ENCODE measurements at regions of chr10 and their contacts with region 1.

Region 1: GRCh38 chr10:8193546-8193945 is 139.1 kb downstream of the GATA3 start:
- DNase-seq: no peak
- H3K4me3 ChIP-seq: no peak overlapping the region
- H3K27ac ChIP-seq: no peak overlapping the region
- H3K4me1 ChIP-seq: no peaks in the 10 kb centered on the region
- H3K27me3 ChIP-seq: no peaks in the 10 kb centered on the region
- CTCF ChIP-seq: no peak
- POLR2A ChIP-seq: no peak

Region 2: DNA sequence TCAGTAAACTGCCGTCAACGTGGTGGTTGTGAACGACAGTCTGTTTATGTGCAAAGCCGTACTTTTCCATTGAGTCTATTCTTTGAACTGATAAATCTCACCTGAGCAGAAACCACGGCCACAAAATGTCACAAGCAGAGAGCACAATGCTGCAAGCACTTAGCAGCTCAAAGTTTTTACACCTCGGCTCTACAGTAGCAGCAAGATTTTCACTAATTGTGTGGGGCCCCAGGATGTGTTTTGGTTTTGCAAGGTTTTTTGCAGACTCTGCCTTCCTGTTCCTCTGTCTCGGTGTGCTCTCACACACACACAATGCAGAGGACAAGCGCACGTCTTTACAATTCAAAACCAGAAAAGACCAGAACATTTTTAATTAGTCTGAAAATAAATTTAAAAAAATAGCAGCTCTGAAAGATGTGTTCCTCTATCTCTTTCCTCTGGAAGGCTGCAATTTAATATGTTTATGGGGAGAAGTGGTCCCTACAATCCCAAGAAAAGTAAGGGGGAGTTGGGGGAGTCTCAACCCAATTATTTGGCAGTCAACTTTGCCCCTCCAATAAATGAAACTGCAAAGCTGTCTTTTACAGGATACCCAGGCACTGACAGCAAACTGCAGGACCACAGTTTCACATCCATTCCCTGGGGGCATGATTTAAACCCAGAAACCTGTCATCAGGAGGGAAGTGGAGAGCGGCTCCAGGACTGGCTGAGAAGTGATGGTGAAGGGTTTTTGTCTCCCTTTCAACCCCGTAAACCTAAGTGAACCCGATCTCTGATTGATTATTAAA is 708.9 kb before region 1 on chr10:
- intact Hi-C with region 1: loop called (anchors 10 kb)
- DNase-seq: no peak
- H3K4me3 ChIP-seq: no peak overlapping the region
- H3K27ac ChIP-seq: no peak overlapping the region
- H3K4me1 ChIP-seq: no peaks in the 10 kb centered on the region
- H3K27me3 ChIP-seq: no peaks in the 10 kb centered on the region
- CTCF ChIP-seq: no peak
- POLR2A ChIP-seq: no peak

Region 3: GRCh38 chr10:8138471-8138870 is 55.1 kb before region 1 on chr10:
- intact Hi-C with region 1: no loop called
- DNase-seq: no peak
- H3K4me3 ChIP-seq: no peak overlapping the region
- H3K27ac ChIP-seq: no peak overlapping the region
- H3K4me1 ChIP-seq: no peaks in the 10 kb centered on the region
- H3K27me3 ChIP-seq: no peaks in the 10 kb centered on the region
- CTCF ChIP-seq: no peak
- POLR2A ChIP-seq: no peak

Measured in uterus (tissue), 4 donors.